ENCODE measurements at regions of chr9 and their contacts with region 1.

Region 1: GRCh38 chr9:98056269-98057137 is at the start of gene NANS:
- DNase-seq: peak; percentile 96
- ATAC-seq: peak; percentile 95
- H3K4me3 Mint-ChIP-seq: peak within 1 kb of the TSS; percentile 91
- H3K27ac Mint-ChIP-seq: peak within 1 kb of the TSS; percentile 94
- H3K4me1 Mint-ChIP-seq: peaks cover 32% of the 10 kb centered on the region
- H3K27me3 Mint-ChIP-seq: no peaks in the 10 kb centered on the region
- CTCF ChIP-seq: no peak
- total RNA-seq, gene NANS: 51.2 to 51.8 TPM

Region 2: GRCh38 chr9:98045234-98046179 is 11.0 kb before region 1 on chr9:
- CTCF ChIA-PET with region 1: interaction called, 7 read pairs
- POLR2A ChIA-PET with region 1: interaction called, 44 read pairs
- intact Hi-C with region 1: no loop called
- DNase-seq: peak; percentile 52
- ATAC-seq: peak; percentile 93
- H3K4me3 Mint-ChIP-seq: peak overlapping the region; percentile 86
- H3K27ac Mint-ChIP-seq: peak overlapping the region; percentile 94
- H3K4me1 Mint-ChIP-seq: peaks cover 36% of the 10 kb centered on the region
- H3K27me3 Mint-ChIP-seq: no peaks in the 10 kb centered on the region
- CTCF ChIP-seq: peak; percentile 35